Ascending aorta (tissue), 2 donors: ENCODE measurements at regions of chr22 and their contacts with region 1.

Region 1: GRCh38 chr22:35299673-35300497 is at the start of gene TOM1:
- DNase-seq: peak; percentile 89 to 98
- H3K4me3 ChIP-seq: peak within 1 kb of the TSS; percentile 84 to 92
- H3K27ac ChIP-seq: peak within 1 kb of the TSS; percentile 96 to 99
- H3K4me1 ChIP-seq: peaks cover 0 to 17% of the 10 kb centered on the region in 2 donors
- H3K27me3 ChIP-seq: no peaks in the 10 kb centered on the region
- CTCF ChIP-seq: no peak
- total RNA-seq, gene TOM1: 84.4 TPM

Region 2: GRCh38 chr22:35212009-35212408 is 87.9 kb before region 1 on chr22:
- intact Hi-C with region 1: no loop called
- DNase-seq: no peak
- H3K4me3 ChIP-seq: no peak overlapping the region
- H3K27ac ChIP-seq: no peak overlapping the region
- H3K4me1 ChIP-seq: no peaks in the 10 kb centered on the region
- H3K27me3 ChIP-seq: no peaks in the 10 kb centered on the region
- CTCF ChIP-seq: no peak

Region 3: GRCh38 chr22:35257321-35258190 is 42.3 kb before region 1 on chr22 and contains the start of gene HMGXB4:
- intact Hi-C with region 1: loop called (anchors 2 kb)
- DNase-seq: peak; percentile 23 to 91
- H3K4me3 ChIP-seq: peak within 1 kb of the TSS; percentile 85 to 93
- H3K27ac ChIP-seq: peak within 1 kb of the TSS; percentile 95 to 96
- H3K4me1 ChIP-seq: peaks cover 0 to 8% of the 10 kb centered on the region in 2 donors
- H3K27me3 ChIP-seq: no peaks in the 10 kb centered on the region
- CTCF ChIP-seq: peak in 1 of 3 experiments; percentile 10
- total RNA-seq, gene HMGXB4: 6.8 TPM

Region 4: DNA sequence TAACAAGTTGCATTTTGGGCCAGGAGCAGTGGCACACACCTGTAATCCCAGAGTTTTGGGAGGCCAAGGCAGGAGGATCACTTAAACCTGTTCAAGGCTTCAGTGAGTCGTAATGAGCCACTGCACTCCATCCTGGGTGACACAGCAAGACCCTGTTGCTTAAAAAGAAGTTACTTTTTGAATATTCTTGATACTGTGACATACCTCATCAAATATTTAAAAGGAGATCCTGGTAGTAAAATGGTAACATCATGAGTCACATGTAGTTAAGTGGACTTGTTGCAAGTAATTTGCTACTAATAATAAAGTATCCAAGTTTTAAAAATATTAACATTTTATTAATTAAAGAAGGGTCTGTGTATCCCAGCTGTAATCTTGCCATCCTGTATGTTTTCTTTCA is 24.3 kb before region 1 on chr22:
- intact Hi-C with region 1: no loop called
- DNase-seq: no peak
- H3K4me3 ChIP-seq: no peak overlapping the region
- H3K27ac ChIP-seq: no peak overlapping the region
- H3K4me1 ChIP-seq: no peaks in the 10 kb centered on the region
- H3K27me3 ChIP-seq: no peaks in the 10 kb centered on the region
- CTCF ChIP-seq: no peak

Region 5: DNA sequence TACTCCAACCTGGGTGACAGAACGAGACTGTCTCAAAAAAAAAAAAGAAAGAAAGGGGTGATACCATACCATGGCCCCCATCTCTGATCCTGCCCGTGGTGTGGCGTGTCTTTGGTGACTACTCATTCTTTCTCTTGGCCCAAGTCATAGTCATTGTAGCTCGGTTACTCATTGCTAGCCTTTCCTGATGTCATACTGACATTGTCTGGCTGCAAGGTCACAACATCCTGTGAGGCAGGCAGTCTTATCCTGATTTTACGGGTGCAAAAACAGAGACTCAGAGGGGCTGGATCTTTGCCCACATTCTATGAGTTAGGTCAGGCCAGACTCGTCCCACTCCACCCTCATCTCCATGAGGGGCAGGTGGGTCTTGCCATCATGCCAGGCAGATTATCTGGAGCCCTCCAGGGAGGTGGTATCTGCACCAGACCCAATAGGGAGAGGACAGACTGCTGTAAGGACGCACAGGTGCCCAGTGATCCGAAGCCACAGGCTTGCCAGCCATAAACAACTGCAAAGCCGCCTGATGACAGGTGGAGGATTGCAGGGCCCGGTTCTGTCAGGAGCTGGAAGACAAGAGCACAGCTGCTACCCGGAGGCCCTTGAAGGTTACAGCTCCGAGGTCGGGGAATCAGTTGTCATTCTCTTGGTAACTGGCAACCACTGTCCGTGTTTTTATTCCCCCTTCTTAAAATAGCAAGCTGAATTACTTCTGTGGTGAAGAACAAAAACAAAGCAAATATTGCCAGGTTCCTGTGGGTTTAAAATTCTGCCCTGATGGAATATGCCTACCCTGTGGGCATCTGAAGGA is 13.6 kb after region 1 on chr22:
- intact Hi-C with region 1: loop called (anchors 1 kb)
- DNase-seq: peak; percentile 35 to 88
- H3K4me3 ChIP-seq: peak overlapping the region in 1 of 2 donors; percentile 15
- H3K27ac ChIP-seq: peak overlapping the region; percentile 77 to 89
- H3K4me1 ChIP-seq: peaks cover 5 to 41% of the 10 kb centered on the region in 2 donors
- H3K27me3 ChIP-seq: no peaks in the 10 kb centered on the region
- CTCF ChIP-seq: no peak

Region 6: GRCh38 chr22:36528795-36529751 is 1229.2 kb after region 1 on chr22 and contains the start of gene EIF3D:
- intact Hi-C with region 1: loop called (anchors 5 kb)
- DNase-seq: peak; percentile 95 to 99
- H3K4me3 ChIP-seq: peak within 1 kb of the TSS; percentile 80
- H3K27ac ChIP-seq: peak within 1 kb of the TSS; percentile 88 to 93
- H3K4me1 ChIP-seq: peaks cover 0 to 11% of the 10 kb centered on the region in 2 donors
- H3K27me3 ChIP-seq: no peaks in the 10 kb centered on the region
- CTCF ChIP-seq: no peak
- total RNA-seq, gene EIF3D: 212 TPM